ENCODE measurements at regions of chr10 and their contacts with region 1.

Region 1: DNA sequence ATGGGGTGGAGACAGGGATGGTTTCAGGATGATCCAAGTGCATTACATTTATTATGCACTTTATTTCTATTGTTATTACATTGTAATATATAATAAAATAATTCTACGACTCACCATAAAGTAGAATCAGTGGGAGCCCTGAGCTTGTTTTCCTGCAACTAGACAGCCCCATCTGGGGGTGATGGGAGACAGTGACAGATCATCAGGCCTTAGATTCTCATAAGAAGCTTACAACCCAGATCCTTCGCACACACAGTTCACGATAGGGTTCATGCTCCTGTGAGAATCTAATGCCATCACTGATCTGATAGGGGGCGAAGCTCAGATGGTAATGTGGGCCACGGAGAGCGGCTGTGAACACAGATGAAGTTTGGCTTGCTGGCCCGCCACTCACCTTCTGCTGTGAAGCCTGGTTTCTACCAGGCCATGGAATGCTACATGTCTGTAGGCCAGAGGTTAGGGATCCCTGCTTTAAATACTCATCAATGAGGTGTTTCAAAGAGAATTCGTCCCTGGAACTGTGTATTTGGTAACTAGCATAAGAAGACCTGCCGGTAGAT is 21.2 kb upstream of the PRKCQ start:
- DNase-seq: peak in 8 of 10 donors; percentile 47 to 82 (median 66)
- ATAC-seq: peak; percentile 39 to 48
- H3K4me3 Mint-ChIP-seq: peak overlapping the region; percentile 49 to 87 (median 78)
- H3K27ac Mint-ChIP-seq: peak overlapping the region; percentile 91 to 99 (median 97)
- H3K4me1 Mint-ChIP-seq: peaks cover 43 to 87% (median 76%) of the 10 kb centered on the region in 4 donors
- H3K27me3 Mint-ChIP-seq: no peaks in the 10 kb centered on the region

Region 2: DNA sequence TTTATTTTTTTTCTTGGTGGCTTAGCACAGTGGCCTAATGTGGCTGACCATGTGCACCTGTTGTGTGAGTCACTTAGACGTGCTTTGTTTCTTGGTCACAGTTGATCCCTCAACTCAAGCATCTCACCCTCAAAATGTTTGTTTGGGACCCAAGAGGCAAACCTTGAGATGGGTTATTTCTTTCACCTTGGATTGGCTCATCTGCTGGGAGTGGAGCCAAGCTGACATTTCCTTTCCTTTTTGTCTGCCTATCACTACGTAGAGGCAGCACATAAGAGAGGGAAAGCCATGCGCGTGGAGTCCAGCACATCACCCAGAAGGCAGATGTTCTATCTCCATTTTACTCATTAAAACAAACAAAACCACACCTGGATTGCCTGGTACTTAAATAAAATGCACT is 14.8 kb before region 1 on chr10:
- POLR2A ChIA-PET with region 1: interaction called, 350 read pairs
- DNase-seq: peak in 1 of 10 donors; percentile 38
- ATAC-seq: peak; percentile 34 to 57
- H3K4me3 Mint-ChIP-seq: peak overlapping the region; percentile 90 to 97 (median 94)
- H3K27ac Mint-ChIP-seq: peak overlapping the region; percentile 94 to 99 (median 96)
- H3K4me1 Mint-ChIP-seq: peaks cover 42 to 88% (median 82%) of the 10 kb centered on the region in 4 donors
- H3K27me3 Mint-ChIP-seq: no peaks in the 10 kb centered on the region

Measured in naive thymus-derived CD8-positive, alpha-beta T cell (primary cell).